HepG2 (cell line): ENCODE measurements at regions of chr9 and their contacts with region 1.

Region 1: GRCh38 chr9:104991144-104991953 is 63.4 kb upstream of the ABCA1 start:
- DNase-seq: peak; percentile 61
- ATAC-seq: peak; percentile 85
- H3K4me3 ChIP-seq: peak overlapping the region; percentile 62 to 83 (median 71)
- H3K27ac ChIP-seq: peak overlapping the region; percentile 45
- H3K4me1 ChIP-seq: peaks cover 35% of the 10 kb centered on the region
- H3K27me3 ChIP-seq: no peaks in the 10 kb centered on the region
- CTCF ChIP-seq: no peak; the same call in 1 of the 2 replicates
- EP300 ChIP-seq: no peak
- POLR2A ChIP-seq: peak in 1 of 2 experiments; percentile 42; a peak in 1 of 4 replicates
- RAD21 ChIP-seq: no peak

Region 2: DNA sequence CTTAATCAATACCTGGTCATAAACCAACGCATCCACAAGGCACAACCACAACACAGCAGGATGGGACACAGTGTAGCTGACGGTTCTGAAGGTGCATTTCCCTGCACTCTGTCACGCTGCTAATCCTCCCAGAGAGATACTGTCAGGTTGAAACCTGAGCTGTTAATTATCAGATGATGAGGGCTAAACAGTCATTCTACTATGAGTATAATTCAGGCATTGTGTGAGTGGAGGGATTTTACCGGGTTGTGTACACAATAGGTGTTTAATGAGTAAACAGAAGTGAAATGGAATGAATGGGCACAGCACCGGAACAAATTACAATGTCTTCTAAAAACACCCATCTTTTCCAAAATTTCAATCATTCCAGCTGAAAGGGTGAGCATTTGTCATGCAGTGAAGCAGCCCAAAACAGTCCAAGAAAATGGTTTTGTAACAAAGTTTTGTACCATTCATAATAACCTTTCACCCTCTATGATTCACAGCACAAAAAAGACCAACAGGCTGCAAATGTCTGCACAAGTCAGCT is 134.9 kb before region 1 on chr9:
- CTCF ChIA-PET with region 1: no interaction called
- POLR2A ChIA-PET with region 1: no interaction called
- in situ Hi-C with region 1: no loop called
- intact Hi-C with region 1: loop called (anchors 5 kb)
- DNase-seq: peak; percentile 86
- ATAC-seq: peak; percentile 94
- H3K4me3 ChIP-seq: no peak overlapping the region
- H3K27ac ChIP-seq: peak overlapping the region; percentile 49
- H3K4me1 ChIP-seq: peaks cover 80% of the 10 kb centered on the region
- H3K27me3 ChIP-seq: no peaks in the 10 kb centered on the region
- CTCF ChIP-seq: no peak
- EP300 ChIP-seq: peak in 1 of 2 experiments; percentile 81; a peak in 2 of 4 replicates
- POLR2A ChIP-seq: no peak
- RAD21 ChIP-seq: no peak

Region 3: GRCh38 chr9:104961238-104961637 is 30.1 kb before region 1 on chr9:
- CTCF ChIA-PET with region 1: no interaction called
- POLR2A ChIA-PET with region 1: no interaction called
- in situ Hi-C with region 1: no loop called
- intact Hi-C with region 1: no loop called
- DNase-seq: peak; percentile 72
- ATAC-seq: peak; percentile 84
- H3K4me3 ChIP-seq: no peak overlapping the region
- H3K27ac ChIP-seq: no peak overlapping the region
- H3K4me1 ChIP-seq: peaks cover 32% of the 10 kb centered on the region
- H3K27me3 ChIP-seq: peaks cover 0 to 5% of the 10 kb centered on the region in 2 experiments; a peak in 1 of 5 replicates
- CTCF ChIP-seq: no peak
- EP300 ChIP-seq: no peak; a peak in 1 of 4 replicates
- POLR2A ChIP-seq: no peak
- RAD21 ChIP-seq: no peak

Region 4: DNA sequence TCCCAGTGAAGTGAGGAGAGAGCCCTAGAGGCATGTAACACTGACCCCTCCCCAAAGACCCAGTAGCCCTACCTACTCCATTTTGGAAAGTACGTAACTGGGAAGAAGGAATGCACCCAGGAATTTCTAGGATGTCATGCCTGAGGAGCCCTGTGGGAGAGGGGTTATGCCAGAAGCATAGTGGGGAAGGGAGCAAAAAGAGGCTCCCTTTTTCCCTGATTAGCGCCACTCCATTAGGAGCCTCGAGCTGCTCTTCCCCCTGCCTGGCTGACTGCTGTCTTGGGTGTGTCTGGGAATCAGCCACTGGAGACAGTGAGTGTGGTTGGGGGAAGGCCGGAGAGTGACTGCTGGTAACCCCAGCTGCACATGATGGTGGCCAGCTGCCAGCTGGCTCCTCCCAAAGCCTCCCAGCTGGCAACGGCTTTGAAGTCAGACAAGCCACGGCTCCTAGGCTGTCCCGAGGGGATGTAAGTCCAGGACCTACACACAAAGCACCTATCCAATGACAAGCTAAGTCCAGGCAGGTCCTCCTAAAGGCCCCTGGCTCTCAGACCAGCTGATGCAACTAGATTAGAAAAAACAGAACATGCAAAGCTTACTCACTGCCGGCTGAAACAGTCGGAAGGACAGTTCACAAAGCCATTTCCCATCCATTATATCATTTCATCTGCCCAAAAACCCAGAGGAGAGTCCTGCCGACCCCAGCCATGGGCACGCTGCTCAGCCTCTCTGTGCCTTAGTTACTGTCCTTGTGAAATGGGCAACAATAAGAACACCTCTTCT is 73.2 kb after region 1 on chr9:
- CTCF ChIA-PET with region 1: no interaction called
- POLR2A ChIA-PET with region 1: interaction called, 4 read pairs
- in situ Hi-C with region 1: no loop called
- intact Hi-C with region 1: loop called (anchors 1 kb)
- DNase-seq: peak; percentile 96
- ATAC-seq: peak; percentile 89
- H3K4me3 ChIP-seq: peak overlapping the region; percentile 1 to 64 (median 46); a peak in 4 of 6 replicates
- H3K27ac ChIP-seq: peak overlapping the region; percentile 63
- H3K4me1 ChIP-seq: peaks cover 62% of the 10 kb centered on the region
- H3K27me3 ChIP-seq: no peaks in the 10 kb centered on the region
- CTCF ChIP-seq: no peak
- EP300 ChIP-seq: peak; percentile 60 to 67; a peak in 3 of 4 replicates
- POLR2A ChIP-seq: no peak; a peak in 1 of 4 replicates
- RAD21 ChIP-seq: no peak

Region 5: DNA sequence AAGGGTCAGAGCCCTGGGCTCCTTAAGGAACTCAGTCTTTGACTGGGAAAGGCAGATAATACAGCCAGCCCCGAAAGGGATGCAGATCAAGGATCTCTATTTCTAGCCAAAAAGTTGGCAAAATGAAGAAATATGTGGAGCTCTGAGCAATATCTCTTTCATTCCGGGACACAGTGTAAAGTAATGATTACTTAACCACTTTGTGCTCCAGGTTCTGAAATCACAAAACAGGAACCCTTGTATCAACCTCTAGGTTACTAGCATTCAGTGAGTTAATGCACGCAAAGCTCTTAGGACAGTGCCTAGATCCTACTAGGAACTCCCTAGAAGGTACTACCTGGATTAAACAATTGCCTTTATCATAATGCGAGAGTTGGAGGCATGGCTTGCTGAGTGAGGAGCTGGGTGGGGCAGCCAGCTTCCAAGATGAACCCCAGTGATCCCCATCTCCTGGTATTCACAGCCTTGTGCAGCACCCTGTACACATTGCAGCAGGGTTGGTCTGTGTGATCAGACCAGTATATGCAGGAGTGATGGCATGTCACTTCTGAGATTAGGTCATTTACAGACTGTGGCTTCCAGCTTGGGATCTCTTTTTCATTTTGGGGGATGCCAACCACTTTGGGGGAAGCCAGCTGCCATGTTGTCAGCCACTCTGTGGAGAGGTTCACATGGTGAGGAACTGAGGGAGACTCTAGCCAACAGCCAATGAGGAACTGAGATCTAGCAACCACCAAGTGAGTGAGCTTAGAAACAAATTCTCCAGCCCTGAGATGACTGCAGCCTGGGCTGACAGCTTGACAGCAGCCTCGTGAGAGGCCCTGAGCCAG is 150.0 kb after region 1 on chr9:
- CTCF ChIA-PET with region 1: no interaction called
- POLR2A ChIA-PET with region 1: no interaction called
- in situ Hi-C with region 1: no loop called
- intact Hi-C with region 1: loop called (anchors 5 kb)
- DNase-seq: no peak
- ATAC-seq: no peak
- H3K4me3 ChIP-seq: no peak overlapping the region
- H3K27ac ChIP-seq: no peak overlapping the region
- H3K4me1 ChIP-seq: peaks cover 10% of the 10 kb centered on the region
- H3K27me3 ChIP-seq: peaks cover 2 to 29% of the 10 kb centered on the region in 2 experiments; a peak in 4 of 5 replicates
- CTCF ChIP-seq: no peak
- EP300 ChIP-seq: no peak
- POLR2A ChIP-seq: no peak
- RAD21 ChIP-seq: no peak

Region 6: DNA sequence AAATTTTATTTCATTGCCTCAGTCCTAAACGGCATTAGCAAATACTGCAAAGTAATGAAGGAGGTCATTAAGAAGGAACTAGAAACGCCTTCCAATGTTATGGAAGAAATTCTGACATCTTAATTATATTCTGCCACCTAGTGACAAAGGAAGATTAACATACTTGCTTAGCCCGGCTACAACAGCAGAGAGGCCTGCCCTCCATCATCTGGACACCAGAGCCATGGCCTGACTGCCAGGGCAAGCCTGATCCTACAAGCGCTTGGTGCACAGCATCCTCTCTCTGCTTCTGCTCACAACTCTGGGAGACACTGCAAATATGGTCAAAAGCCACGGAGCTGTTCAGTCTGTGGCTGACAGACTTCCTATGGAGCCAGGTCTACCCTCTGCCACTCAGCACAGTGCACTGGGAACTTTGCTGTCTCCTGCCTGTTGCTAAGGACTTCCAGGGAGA is 165.8 kb after region 1 on chr9:
- CTCF ChIA-PET with region 1: no interaction called
- POLR2A ChIA-PET with region 1: no interaction called
- in situ Hi-C with region 1: loop called (anchors 10 kb)
- intact Hi-C with region 1: no loop called
- DNase-seq: peak; percentile 24
- ATAC-seq: peak; percentile 92
- H3K4me3 ChIP-seq: no peak overlapping the region
- H3K27ac ChIP-seq: no peak overlapping the region
- H3K4me1 ChIP-seq: peaks cover 24% of the 10 kb centered on the region
- H3K27me3 ChIP-seq: no peaks in the 10 kb centered on the region
- CTCF ChIP-seq: peak; percentile 74
- EP300 ChIP-seq: no peak
- POLR2A ChIP-seq: no peak
- RAD21 ChIP-seq: peak; percentile 41; the same call in 1 of the 2 replicates